A673 (cell line): ENCODE measurements at regions of chr5 and their contacts with region 1.

Region 1: GRCh38 chr5:138223532-138223931 is 10.4 kb upstream of the CDC23 start:
- DNase-seq: no peak
- H3K4me3 ChIP-seq: no peak overlapping the region
- H3K27ac ChIP-seq: no peak overlapping the region
- H3K4me1 ChIP-seq: no peaks in the 10 kb centered on the region
- H3K27me3 ChIP-seq: no peaks in the 10 kb centered on the region
- CTCF ChIP-seq: no peak

Region 2: DNA sequence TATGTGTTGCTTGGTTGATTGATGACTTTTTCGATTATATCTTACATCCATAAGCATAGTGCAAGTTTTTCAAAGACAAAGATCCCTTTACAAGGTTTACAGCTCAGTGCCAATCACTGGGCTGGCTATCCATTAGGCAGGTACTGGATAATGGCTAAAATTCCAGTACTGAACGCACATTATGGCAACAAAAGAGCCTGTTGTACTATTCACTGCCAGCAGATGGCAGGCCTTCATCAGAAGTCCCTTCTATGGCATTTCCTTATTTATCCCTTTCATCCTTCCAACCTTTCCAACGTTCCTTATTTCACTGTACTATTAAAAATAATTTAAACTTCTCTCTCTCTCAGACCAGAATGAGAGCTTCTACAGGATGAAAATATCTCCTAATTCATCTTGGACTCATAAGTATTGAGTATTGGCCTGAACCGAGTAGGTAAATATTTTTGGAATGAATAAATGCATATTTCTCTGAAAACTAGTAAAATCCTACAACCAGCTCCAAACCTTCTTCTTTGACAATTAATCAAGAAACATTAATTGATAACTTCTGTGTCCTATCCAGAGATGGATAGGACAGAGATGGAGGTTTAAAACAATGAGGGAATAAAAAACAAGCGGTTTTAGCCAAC is 146.4 kb before region 1 on chr5:
- CTCF ChIA-PET with region 1: no interaction called
- POLR2A ChIA-PET with region 1: no interaction called
- intact Hi-C with region 1: no loop called
- DNase-seq: peak; percentile 74
- H3K4me3 ChIP-seq: no peak overlapping the region
- H3K27ac ChIP-seq: no peak overlapping the region
- H3K4me1 ChIP-seq: no peaks in the 10 kb centered on the region
- H3K27me3 ChIP-seq: no peaks in the 10 kb centered on the region
- CTCF ChIP-seq: peak; percentile 82

Region 3: DNA sequence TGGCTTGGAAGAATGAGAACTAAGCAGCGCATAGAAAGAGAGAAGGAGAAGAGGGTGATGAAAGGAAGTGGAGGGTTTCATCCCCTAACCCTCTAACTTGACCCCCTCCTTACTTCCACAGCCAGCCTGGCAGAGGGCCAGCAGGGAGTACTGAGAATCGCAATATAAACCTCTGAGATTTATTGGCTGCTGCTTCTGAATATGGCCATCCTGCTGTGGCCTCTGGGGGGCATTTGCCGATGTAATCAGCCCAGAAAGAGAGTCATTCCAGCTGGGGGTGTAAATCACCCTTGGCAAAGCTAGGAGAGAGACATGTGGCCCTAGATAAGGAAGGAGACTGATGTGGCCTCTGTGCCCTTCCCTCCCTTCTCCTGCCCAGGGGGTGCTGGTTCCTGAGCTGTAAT is 51.8 kb after region 1 on chr5:
- CTCF ChIA-PET with region 1: no interaction called
- POLR2A ChIA-PET with region 1: no interaction called
- intact Hi-C with region 1: loop called (anchors 5 kb)
- DNase-seq: peak; percentile 55
- H3K4me3 ChIP-seq: no peak overlapping the region
- H3K27ac ChIP-seq: no peak overlapping the region
- H3K4me1 ChIP-seq: peaks cover 16% of the 10 kb centered on the region
- H3K27me3 ChIP-seq: no peaks in the 10 kb centered on the region
- CTCF ChIP-seq: 0 out of 2 replicates have a peak, but pooled peaks have one; percentile 20

Region 4: DNA sequence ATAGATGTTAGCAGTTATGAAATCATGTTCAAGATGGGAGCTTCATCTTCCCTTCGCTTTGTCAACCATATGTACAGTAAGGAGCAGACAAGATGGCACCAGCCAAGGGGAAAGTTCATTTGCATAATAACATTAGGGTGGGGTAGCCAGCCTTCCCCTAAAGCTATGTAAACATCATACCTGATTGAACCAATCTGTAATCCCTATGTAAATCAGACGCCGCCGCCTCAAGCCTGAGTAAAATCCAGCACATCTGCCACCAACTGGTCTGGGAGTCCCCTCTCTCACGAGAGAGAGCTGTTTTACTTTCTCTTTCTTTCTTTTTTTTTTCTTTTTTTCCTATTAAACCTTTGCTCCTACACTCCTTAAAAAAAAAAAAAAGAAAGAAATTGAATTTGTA is 184.5 kb after region 1 on chr5:
- CTCF ChIA-PET with region 1: no interaction called
- POLR2A ChIA-PET with region 1: no interaction called
- intact Hi-C with region 1: loop called (anchors 5 kb)
- DNase-seq: peak; percentile 45
- H3K4me3 ChIP-seq: no peak overlapping the region
- H3K27ac ChIP-seq: no peak overlapping the region
- H3K4me1 ChIP-seq: no peaks in the 10 kb centered on the region
- H3K27me3 ChIP-seq: no peaks in the 10 kb centered on the region
- CTCF ChIP-seq: no peak